BJ (cell line): ENCODE measurements at regions of chr1 and their contacts with region 1.

Region 1: GRCh38 chr1:151024540-151025146 is 11.7 kb upstream of the BNIPL start:
- DNase-seq: no peak
- H3K4me3 ChIP-seq: no peak overlapping the region
- H3K27me3 ChIP-seq: no peaks in the 10 kb centered on the region
- CTCF ChIP-seq: peak; percentile 81

Region 2: GRCh38 chr1:151036363-151036762 is 11.7 kb after region 1 on chr1 and contains the start of gene BNIPL:
- CTCF ChIA-PET with region 1: interaction called, 26 read pairs
- POLR2A ChIA-PET with region 1: no interaction called
- DNase-seq: no peak
- H3K4me3 ChIP-seq: no peak within 1 kb of the TSS
- H3K27me3 ChIP-seq: no peaks in the 10 kb centered on the region
- CTCF ChIP-seq: no peak
- polyA plus RNA-seq, gene BNIPL: 0.18 and 0.31 TPM in 2 replicates

Region 3: DNA sequence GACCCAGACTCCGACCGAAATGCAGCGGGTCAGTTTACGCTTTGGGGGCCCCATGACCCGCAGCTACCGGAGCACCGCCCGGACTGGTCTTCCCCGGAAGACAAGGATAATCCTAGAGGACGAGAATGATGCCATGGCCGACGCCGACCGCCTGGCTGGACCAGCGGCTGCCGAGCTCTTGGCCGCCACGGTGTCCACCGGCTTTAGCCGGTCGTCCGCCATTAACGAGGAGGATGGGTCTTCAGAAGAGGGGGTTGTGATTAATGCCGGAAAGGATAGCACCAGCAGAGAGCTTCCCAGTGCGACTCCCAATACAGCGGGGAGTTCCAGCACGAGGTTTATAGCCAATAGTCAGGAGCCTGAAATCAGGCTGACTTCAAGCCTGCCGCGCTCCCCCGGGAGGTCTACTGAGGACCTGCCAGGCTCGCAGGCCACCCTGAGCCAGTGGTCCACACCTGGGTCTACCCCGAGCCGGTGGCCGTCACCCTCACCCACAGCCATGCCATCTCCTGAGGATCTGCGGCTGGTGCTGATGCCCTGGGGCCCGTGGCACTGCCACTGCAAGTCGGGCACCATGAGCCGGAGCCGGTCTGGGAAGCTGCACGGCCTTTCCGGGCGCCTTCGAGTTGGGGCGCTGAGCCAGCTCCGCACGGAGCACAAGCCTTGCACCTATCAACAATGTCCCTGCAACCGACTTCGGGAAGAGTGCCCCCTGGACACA is 23.4 kb after region 1 on chr1:
- CTCF ChIA-PET with region 1: interaction called, 11 read pairs
- POLR2A ChIA-PET with region 1: no interaction called
- DNase-seq: no peak
- H3K4me3 ChIP-seq: peak overlapping the region; percentile 60
- H3K27me3 ChIP-seq: no peaks in the 10 kb centered on the region
- CTCF ChIP-seq: peak; percentile 60

Region 4: GRCh38 chr1:151156515-151156819 is 131.8 kb after region 1 on chr1 and contains the start of gene TNFAIP8L2:
- CTCF ChIA-PET with region 1: interaction called, 11 read pairs
- POLR2A ChIA-PET with region 1: no interaction called
- DNase-seq: no peak
- H3K4me3 ChIP-seq: no peak within 1 kb of the TSS
- H3K27me3 ChIP-seq: no peaks in the 10 kb centered on the region
- CTCF ChIP-seq: no peak
- polyA plus RNA-seq, gene TNFAIP8L2: not detected in 2 replicates